H1 (cell line): ENCODE measurements at regions of chr12 and their contacts with region 1.

Region 1: GRCh38 chr12:51083126-51083833 is at the start of gene CSRNP2:
- DNase-seq: peak; percentile 89 to 97
- H3K4me3 ChIP-seq: peak within 1 kb of the TSS; percentile 77 to 98 (median 86)
- H3K27ac ChIP-seq: peak within 1 kb of the TSS; percentile 59
- H3K4me1 ChIP-seq: peaks cover 4 to 6% (median 5%) of the 10 kb centered on the region in 4 experiments; a peak in 4 of 7 replicates
- H3K27me3 ChIP-seq: no peaks in the 10 kb centered on the region
- CTCF ChIP-seq: peak in 1 of 3 experiments; percentile 2; a peak in 2 of 4 replicates
- EP300 ChIP-seq: peak in 1 of 2 experiments; percentile 18; a peak in 1 of 3 replicates
- POLR2A ChIP-seq: peak; percentile 99
- RAD21 ChIP-seq: 0 out of 4 replicates have a peak, but pooled peaks of 1 of the 2 experiments have one; percentile 12
- total RNA-seq, gene CSRNP2: 31.9 and 34.0 TPM in 2 replicates

Region 2: DNA sequence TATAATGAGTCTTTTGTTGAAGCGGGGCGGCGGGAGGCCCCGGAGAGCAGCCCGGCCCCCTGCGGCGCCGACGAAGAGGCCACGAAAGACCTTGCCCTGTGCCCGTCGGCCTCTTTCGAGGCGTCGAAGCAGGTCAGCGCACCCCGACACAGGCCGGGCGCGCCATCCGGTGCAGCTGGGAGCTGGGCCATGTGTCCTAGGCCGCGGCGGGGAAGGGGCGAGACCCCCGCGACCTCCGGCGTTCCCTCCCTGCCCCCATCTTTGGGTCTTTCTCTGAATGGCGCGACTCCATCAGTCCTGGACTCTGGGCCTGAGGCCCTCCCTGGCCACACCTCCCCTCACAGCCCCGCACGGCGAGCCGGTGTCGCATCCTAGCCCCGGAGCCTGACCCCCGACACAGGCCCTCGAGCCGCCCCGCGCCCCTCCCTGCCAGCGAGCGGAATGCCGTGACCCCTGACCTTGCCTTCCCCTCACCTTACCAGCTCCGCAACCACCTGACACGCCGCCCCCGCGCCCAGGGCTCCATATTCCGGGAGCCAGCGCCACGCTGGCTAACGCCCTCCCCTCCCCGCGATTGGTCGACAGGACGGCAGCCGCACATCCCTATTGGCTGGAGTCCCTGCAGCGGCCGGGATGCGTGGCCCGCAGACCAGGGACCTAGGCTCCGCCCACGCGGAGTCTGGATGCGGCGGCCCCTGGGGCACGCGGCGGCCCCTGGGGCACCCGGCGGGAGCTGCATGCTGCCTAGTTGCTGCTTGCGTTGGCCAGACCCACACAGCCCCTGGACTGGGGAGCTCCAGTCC is 57.2 kb before region 1 on chr12 and contains the start of gene SLC11A2:
- CTCF ChIA-PET with region 1: no interaction called
- POLR2A ChIA-PET with region 1: interaction called, 30 read pairs
- DNase-seq: peak; percentile 92 to 95
- H3K4me3 ChIP-seq: peak within 1 kb of the TSS; percentile 54 to 72 (median 64)
- H3K27ac ChIP-seq: peak within 1 kb of the TSS; percentile 90
- H3K4me1 ChIP-seq: peaks cover 9 to 16% (median 13%) of the 10 kb centered on the region in 4 experiments
- H3K27me3 ChIP-seq: no peaks in the 10 kb centered on the region; a peak in 1 of 7 replicates
- CTCF ChIP-seq: no peak; a peak in 1 of 4 replicates
- EP300 ChIP-seq: 0 out of 3 replicates have a peak, but pooled peaks of 1 of the 2 experiments have one; percentile 61
- POLR2A ChIP-seq: peak; percentile 81 to 87
- RAD21 ChIP-seq: 0 out of 4 replicates have a peak, but pooled peaks of 1 of the 2 experiments have one; percentile 3
- total RNA-seq, gene SLC11A2: 59.3 and 61.5 TPM in 2 replicates

Region 3: GRCh38 chr12:51070004-51070403 is 13.3 kb before region 1 on chr12:
- CTCF ChIA-PET with region 1: no interaction called
- POLR2A ChIA-PET with region 1: interaction called, 23 read pairs
- DNase-seq: no peak
- H3K4me3 ChIP-seq: no peak overlapping the region
- H3K27ac ChIP-seq: no peak overlapping the region
- H3K4me1 ChIP-seq: no peaks in the 10 kb centered on the region
- H3K27me3 ChIP-seq: no peaks in the 10 kb centered on the region
- CTCF ChIP-seq: no peak
- EP300 ChIP-seq: no peak
- POLR2A ChIP-seq: no peak
- RAD21 ChIP-seq: no peak

Region 4: DNA sequence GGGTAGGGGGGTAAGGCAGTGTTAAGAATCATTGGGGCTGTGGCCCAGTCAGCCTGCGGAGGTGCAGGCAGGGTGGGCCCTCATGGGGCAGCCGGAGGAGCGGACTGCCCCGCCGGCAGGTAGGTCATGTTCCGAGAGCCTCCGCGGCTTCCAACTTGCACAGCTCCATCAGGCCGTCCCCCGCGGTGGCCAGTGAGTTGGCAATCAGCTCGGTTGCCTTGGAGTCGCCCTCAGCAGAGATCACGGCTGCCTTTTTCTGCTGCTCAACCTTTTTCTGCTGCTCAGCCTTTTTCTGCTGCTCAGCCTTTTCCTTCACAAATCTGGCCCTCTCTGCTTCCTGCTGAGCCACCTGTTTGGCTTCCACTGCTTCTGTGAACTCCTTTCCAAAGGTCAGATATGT is 41.2 kb after region 1 on chr12:
- CTCF ChIA-PET with region 1: interaction called, 3 read pairs
- POLR2A ChIA-PET with region 1: interaction called, 12 read pairs
- DNase-seq: no peak
- H3K4me3 ChIP-seq: no peak overlapping the region
- H3K27ac ChIP-seq: no peak overlapping the region
- H3K4me1 ChIP-seq: no peaks in the 10 kb centered on the region
- H3K27me3 ChIP-seq: no peaks in the 10 kb centered on the region
- CTCF ChIP-seq: no peak
- EP300 ChIP-seq: no peak
- POLR2A ChIP-seq: no peak
- RAD21 ChIP-seq: no peak

Region 5: DNA sequence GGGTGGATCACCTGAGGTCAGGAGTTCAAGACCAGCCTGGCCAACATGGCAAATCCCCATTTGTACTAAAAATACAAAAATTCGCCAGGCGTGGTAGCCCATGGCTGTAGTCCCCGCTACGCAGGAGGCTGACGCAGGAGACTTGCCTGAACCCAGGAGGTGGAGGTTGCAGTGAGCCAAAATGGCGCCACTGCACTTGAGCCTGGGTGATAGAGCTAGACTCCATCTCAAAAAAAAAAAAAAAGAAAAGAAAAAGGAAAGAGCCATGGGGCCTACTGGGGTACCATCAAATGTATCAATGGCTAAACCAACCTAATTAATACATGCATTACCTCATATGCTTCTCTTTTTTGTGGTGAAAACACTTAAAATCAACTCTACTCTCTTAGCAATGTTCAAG is 78.9 kb after region 1 on chr12:
- CTCF ChIA-PET with region 1: no interaction called
- POLR2A ChIA-PET with region 1: interaction called, 10 read pairs
- DNase-seq: no peak
- H3K4me3 ChIP-seq: no peak overlapping the region
- H3K27ac ChIP-seq: no peak overlapping the region
- H3K4me1 ChIP-seq: no peaks in the 10 kb centered on the region
- H3K27me3 ChIP-seq: no peaks in the 10 kb centered on the region
- CTCF ChIP-seq: no peak
- EP300 ChIP-seq: no peak
- POLR2A ChIP-seq: no peak
- RAD21 ChIP-seq: no peak

Region 6: DNA sequence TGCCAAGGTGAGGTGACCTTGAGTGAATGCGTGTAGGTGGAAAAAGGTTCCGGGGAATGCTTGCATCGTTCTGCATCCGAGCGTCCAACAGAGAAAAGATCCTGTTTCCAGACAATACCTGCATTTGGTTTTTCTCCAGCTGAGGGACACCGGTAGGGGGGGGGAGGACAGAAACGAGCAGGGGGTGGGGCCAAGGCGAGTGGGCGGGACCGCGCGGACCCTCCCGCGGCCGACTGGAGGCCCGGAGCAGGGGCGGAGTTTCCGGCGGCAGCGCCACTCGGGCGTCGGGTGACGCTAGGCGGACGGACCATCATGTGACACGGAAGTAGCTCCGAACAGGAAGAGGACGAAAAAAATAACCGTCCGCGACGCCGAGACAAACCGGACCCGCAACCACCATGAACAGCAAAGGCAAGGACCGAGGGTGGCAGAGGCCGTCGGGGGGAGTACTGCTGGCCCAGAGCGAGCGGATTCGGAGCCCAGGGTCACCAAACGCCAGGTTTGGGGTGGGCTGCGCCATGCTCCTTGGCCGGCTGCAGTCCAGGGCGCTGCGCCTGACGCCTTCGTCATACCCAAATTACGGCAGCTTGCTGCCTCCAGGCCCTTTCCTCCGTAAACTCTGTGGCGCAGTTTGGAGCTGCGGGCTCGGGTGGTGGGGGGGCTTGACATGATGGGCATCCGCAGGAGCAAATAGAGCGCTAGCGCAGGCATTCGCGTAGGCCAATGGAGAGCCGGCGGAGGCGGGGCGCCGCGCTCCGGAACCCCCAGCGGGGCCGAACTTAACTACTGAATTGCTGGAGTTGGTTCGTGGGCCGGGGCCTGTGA is 155.4 kb after region 1 on chr12 and contains the start of gene DAZAP2:
- CTCF ChIA-PET with region 1: no interaction called
- POLR2A ChIA-PET with region 1: interaction called, 21 read pairs
- DNase-seq: peak; percentile 89 to 92
- H3K4me3 ChIP-seq: peak within 1 kb of the TSS; percentile 90 to 100 (median 99)
- H3K27ac ChIP-seq: peak within 1 kb of the TSS; percentile 99
- H3K4me1 ChIP-seq: peaks cover 0 to 9% (median 5%) of the 10 kb centered on the region in 4 experiments; a peak in 6 of 7 replicates
- H3K27me3 ChIP-seq: no peaks in the 10 kb centered on the region
- CTCF ChIP-seq: peak in 1 of 3 experiments; percentile 7; a peak in 1 of 4 replicates
- EP300 ChIP-seq: peak in 1 of 2 experiments; percentile 32; a peak in 1 of 3 replicates
- POLR2A ChIP-seq: peak; percentile 69 to 92
- RAD21 ChIP-seq: no peak
- total RNA-seq, gene DAZAP2: 24.9 and 27.1 TPM in 2 replicates